Heart left ventricle (tissue), 16 donors: ENCODE measurements at regions of chr2 and their contacts with region 1.

Region 1: GRCh38 chr2:39227628-39228412 is 15.9 kb downstream of the CDKL4 start:
- DNase-seq: peak; percentile 71 to 88 (median 81)
- ATAC-seq: peak; percentile 56 to 90 (median 89)
- H3K4me3 ChIP-seq: peak overlapping the region in 9 of 12 donors; percentile 10 to 47 (median 30)
- H3K27ac ChIP-seq: peak overlapping the region in 1 of 12 donors; percentile 28
- H3K4me1 ChIP-seq: peaks cover 0 to 21% (median 7%) of the 10 kb centered on the region in 12 donors
- H3K27me3 ChIP-seq: no peaks in the 10 kb centered on the region
- CTCF ChIP-seq: peak; percentile 77 to 93 (median 88)
- POLR2A ChIP-seq: no peak

Region 2: GRCh38 chr2:38947240-38948239 is 280.3 kb before region 1 on chr2:
- intact Hi-C with region 1: loop called (anchors 2 to 10 kb)
- DNase-seq: peak; percentile 47 to 72 (median 58)
- ATAC-seq: peak in 3 of 4 donors; percentile 74 to 77 (median 76)
- H3K4me3 ChIP-seq: no peak overlapping the region
- H3K27ac ChIP-seq: no peak overlapping the region
- H3K4me1 ChIP-seq: peaks cover 0 to 4% (median 0%) of the 10 kb centered on the region in 12 donors
- H3K27me3 ChIP-seq: no peaks in the 10 kb centered on the region
- CTCF ChIP-seq: peak; percentile 45 to 74 (median 62)
- POLR2A ChIP-seq: no peak

Region 3: GRCh38 chr2:38954986-38955385 is 272.8 kb before region 1 on chr2:
- intact Hi-C with region 1: loop called in 2 of 10 experiments (anchors 5 to 10 kb)
- DNase-seq: no peak
- ATAC-seq: no peak
- H3K4me3 ChIP-seq: no peak overlapping the region
- H3K27ac ChIP-seq: no peak overlapping the region
- H3K4me1 ChIP-seq: peaks cover 0 to 6% (median 4%) of the 10 kb centered on the region in 12 donors
- H3K27me3 ChIP-seq: no peaks in the 10 kb centered on the region
- CTCF ChIP-seq: no peak
- POLR2A ChIP-seq: no peak

Region 4: GRCh38 chr2:38959938-38960608 is 267.7 kb before region 1 on chr2:
- intact Hi-C with region 1: loop called in 1 of 10 experiments (anchors 10 kb)
- DNase-seq: peak; percentile 81 to 92 (median 82)
- ATAC-seq: peak; percentile 90 to 98 (median 97)
- H3K4me3 ChIP-seq: peak overlapping the region; percentile 2 to 66 (median 54)
- H3K27ac ChIP-seq: peak overlapping the region in 4 of 12 donors; percentile 24 to 55 (median 34)
- H3K4me1 ChIP-seq: peaks cover 0 to 14% (median 7%) of the 10 kb centered on the region in 12 donors
- H3K27me3 ChIP-seq: no peaks in the 10 kb centered on the region
- CTCF ChIP-seq: peak in 5 of 12 donors; percentile 6 to 33 (median 18)
- POLR2A ChIP-seq: no peak

Region 5: DNA sequence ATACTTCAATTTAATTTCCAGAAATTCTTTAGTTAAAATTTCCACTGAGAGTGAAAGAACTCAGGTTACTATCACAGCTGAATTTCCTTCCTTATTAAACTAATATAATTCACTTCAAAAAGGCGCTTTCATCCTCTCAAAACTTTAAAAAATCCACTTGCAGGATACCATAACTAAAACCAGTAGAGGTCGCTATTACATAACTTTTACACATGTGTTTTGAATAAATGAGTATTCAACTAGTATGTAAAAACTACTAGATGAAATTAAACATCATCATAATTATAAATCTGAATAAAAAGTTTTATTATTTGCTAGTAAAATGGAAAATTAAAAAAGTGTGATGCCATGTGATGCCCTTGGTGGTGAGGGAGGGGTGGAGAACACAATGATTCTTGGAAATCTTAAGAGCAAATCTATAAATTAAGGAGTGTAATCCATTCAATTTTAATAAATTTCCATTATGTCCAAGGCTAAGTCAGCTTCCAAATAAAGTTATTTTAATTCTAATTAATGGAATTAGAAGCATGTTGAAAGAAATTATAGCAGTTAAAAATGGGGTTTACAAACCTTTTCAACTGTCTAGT is 168.4 kb before region 1 on chr2:
- intact Hi-C with region 1: loop called (anchors 1 to 2 kb)
- DNase-seq: no peak
- ATAC-seq: no peak
- H3K4me3 ChIP-seq: no peak overlapping the region
- H3K27ac ChIP-seq: no peak overlapping the region
- H3K4me1 ChIP-seq: no peaks in the 10 kb centered on the region
- H3K27me3 ChIP-seq: no peaks in the 10 kb centered on the region
- CTCF ChIP-seq: peak; percentile 60 to 82 (median 74)
- POLR2A ChIP-seq: no peak

Region 6: GRCh38 chr2:39124000-39124745 is 103.6 kb before region 1 on chr2:
- intact Hi-C with region 1: loop called (anchors 1 to 5 kb)
- DNase-seq: peak; percentile 95 to 98 (median 98)
- ATAC-seq: peak; percentile 84 to 94 (median 93)
- H3K4me3 ChIP-seq: peak overlapping the region; percentile 37 to 94 (median 76)
- H3K27ac ChIP-seq: peak overlapping the region; percentile 82 to 96 (median 92)
- H3K4me1 ChIP-seq: peaks cover 0 to 50% (median 18%) of the 10 kb centered on the region in 12 donors
- H3K27me3 ChIP-seq: no peaks in the 10 kb centered on the region
- CTCF ChIP-seq: peak; percentile 44 to 75 (median 66)
- POLR2A ChIP-seq: peak in 1 of 2 donors; percentile 88